SK-N-SH (cell line): ENCODE measurements at regions of chr11 and their contacts with region 1.

Region 1: GRCh38 chr11:1050581-1051355 is 14.2 kb upstream of the MUC6 start:
- DNase-seq: peak; percentile 95
- H3K4me3 ChIP-seq: no peak overlapping the region
- H3K27ac ChIP-seq: no peak overlapping the region
- H3K4me1 ChIP-seq: peaks cover 0 to 22% of the 10 kb centered on the region in 2 experiments; a peak in 1 of 4 replicates
- H3K27me3 ChIP-seq: no peaks in the 10 kb centered on the region; the same call in 1 of the 2 replicates
- CTCF ChIP-seq: peak; percentile 79
- EP300 ChIP-seq: no peak
- RAD21 ChIP-seq: peak; percentile 92

Region 2: GRCh38 chr11:842370-843002 is 208.3 kb before region 1 on chr11 and contains the starts of genes POLR2L and TSPAN4:
- CTCF ChIA-PET with region 1: interaction called, 70 read pairs
- POLR2A ChIA-PET with region 1: interaction called, 5 read pairs
- DNase-seq: peak; percentile 97
- H3K4me3 ChIP-seq: peak within 1 kb of the TSS; percentile 95 to 100
- H3K27ac ChIP-seq: peak within 1 kb of the TSS; percentile 91 to 96
- H3K4me1 ChIP-seq: peaks cover 24 to 35% of the 10 kb centered on the region in 2 experiments; a peak in 3 of 4 replicates
- H3K27me3 ChIP-seq: no peaks in the 10 kb centered on the region
- CTCF ChIP-seq: no peak
- EP300 ChIP-seq: peak in 1 of 2 experiments; percentile 52; a peak in 1 of 4 replicates
- RAD21 ChIP-seq: no peak
- polyA plus RNA-seq, gene POLR2L: 287 and 540 TPM in 2 replicates
- polyA plus RNA-seq, gene TSPAN4: 201 and 226 TPM in 2 replicates

Region 3: DNA sequence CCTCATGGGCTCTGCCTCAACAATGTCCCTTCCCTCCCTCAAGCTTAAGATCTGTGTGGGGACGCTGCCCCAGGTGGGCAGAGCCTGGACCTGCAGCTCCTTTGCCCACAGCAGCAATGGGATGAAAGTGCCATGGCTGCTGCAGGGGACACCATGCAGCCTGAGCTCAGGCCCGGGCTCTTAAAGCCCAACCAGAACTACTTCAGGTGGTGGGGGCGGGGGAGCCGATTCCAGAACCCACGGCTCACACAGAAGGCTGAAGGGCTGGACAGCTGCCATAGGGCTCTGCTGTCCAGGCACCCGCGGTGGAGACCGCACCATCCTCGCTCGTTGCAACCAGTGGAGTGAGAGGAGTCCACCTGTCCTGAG is 152.6 kb before region 1 on chr11:
- CTCF ChIA-PET with region 1: interaction called, 15 read pairs
- POLR2A ChIA-PET with region 1: no interaction called
- DNase-seq: peak; percentile 70
- H3K4me3 ChIP-seq: no peak overlapping the region
- H3K27ac ChIP-seq: no peak overlapping the region
- H3K4me1 ChIP-seq: no peaks in the 10 kb centered on the region
- H3K27me3 ChIP-seq: no peaks in the 10 kb centered on the region
- CTCF ChIP-seq: peak; percentile 48
- EP300 ChIP-seq: no peak
- RAD21 ChIP-seq: peak; percentile 62

Region 4: DNA sequence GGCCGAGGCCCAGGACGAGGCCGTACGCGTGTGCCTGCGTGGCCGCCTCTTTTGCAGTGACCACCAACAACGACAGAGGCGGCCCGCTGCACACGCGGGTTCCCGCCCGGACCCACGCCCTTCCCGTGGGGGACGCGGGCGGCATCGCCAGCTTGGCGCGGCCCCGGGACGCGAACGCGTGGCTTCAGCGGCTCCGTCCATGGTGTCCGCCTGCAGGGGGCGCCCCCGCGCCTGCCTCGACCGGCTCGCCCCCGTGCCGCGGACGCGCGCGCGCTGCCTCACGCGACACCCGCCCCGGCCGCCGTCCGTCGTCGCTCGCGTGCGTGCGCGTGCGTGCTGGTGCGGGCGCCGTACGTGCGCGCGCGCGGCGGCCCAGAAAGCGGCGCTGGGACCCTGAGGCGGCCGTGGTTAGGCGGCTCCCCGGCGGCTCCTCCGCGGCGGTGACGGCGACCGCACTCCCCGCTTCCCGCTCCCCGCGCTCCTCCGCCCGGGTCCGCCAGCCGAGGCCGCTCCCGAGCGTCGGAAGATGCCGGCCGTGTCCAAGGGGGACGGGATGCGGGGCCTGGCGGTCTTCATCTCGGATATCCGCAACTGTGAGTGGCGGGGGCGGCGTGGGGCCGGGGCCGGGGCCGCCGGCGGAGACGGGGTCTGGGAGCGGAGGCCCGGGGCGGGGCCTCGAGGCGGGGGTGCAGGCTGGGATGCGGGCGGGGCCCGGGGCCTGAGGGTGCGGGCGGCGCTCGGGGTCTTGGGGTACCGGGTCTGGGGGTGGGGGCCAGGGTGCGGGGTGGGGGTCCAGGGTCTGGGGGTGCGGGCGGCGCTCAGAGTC is 125.1 kb before region 1 on chr11 and contains the start of gene AP2A2:
- CTCF ChIA-PET with region 1: interaction called, 27 read pairs
- POLR2A ChIA-PET with region 1: no interaction called
- DNase-seq: peak; percentile 99
- H3K4me3 ChIP-seq: peak within 1 kb of the TSS; percentile 69 to 82
- H3K27ac ChIP-seq: peak within 1 kb of the TSS; percentile 64 to 92; a peak in 3 of 4 replicates
- H3K4me1 ChIP-seq: peaks cover 0 to 31% of the 10 kb centered on the region in 2 experiments; a peak in 1 of 4 replicates
- H3K27me3 ChIP-seq: no peaks in the 10 kb centered on the region
- CTCF ChIP-seq: peak; percentile 60
- EP300 ChIP-seq: no peak
- RAD21 ChIP-seq: peak; percentile 25; the same call in 1 of the 2 replicates
- polyA plus RNA-seq, gene AP2A2: 36.3 and 42.7 TPM in 2 replicates

Region 5: GRCh38 chr11:988393-988792 is 62.4 kb before region 1 on chr11:
- CTCF ChIA-PET with region 1: no interaction called
- POLR2A ChIA-PET with region 1: no interaction called
- DNase-seq: no peak
- H3K4me3 ChIP-seq: no peak overlapping the region
- H3K27ac ChIP-seq: no peak overlapping the region
- H3K4me1 ChIP-seq: no peaks in the 10 kb centered on the region
- H3K27me3 ChIP-seq: no peaks in the 10 kb centered on the region
- CTCF ChIP-seq: no peak
- EP300 ChIP-seq: no peak
- RAD21 ChIP-seq: no peak

Region 6: DNA sequence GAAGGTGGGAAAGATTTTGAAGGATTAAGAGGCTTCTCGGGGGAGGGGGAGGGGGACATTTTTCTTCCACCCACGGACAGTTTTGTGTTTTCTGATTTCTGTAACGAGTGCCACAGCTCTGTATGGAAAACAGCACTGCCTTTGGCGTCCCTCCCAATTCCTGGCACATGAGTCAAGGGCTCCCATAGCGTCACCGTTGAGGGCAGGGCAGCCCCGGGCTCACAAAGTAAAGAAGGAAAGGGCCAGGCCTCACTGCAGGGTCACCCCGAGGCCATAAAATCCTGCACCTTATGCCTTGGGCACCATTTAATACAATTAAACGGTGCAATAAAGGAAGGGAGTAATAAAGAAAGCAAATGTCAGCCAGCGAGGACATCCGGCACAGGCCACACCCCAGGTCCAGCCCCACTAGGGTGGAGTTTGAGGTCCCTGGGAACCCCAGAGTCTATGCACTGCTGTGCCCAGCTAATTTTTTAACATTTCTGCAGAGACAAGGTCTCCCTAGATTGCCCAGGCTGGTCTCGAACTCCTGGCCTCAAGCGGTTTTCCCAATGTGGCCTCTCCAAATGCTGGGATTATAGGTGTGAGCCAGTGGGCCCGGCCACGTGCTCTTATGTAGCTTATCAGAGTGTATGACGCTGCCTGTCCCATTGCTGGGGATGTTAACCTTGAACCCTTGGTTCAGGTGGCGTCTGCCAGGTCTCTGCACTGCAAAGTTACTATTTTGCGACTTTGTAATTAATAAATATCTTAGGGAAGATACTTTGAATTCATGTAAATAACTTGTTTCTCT is 10.3 kb after region 1 on chr11:
- CTCF ChIA-PET with region 1: interaction called, 16 read pairs
- POLR2A ChIA-PET with region 1: no interaction called
- DNase-seq: no peak
- H3K4me3 ChIP-seq: no peak overlapping the region
- H3K27ac ChIP-seq: no peak overlapping the region
- H3K4me1 ChIP-seq: no peaks in the 10 kb centered on the region
- H3K27me3 ChIP-seq: no peaks in the 10 kb centered on the region
- CTCF ChIP-seq: no peak
- EP300 ChIP-seq: no peak
- RAD21 ChIP-seq: no peak